ENCODE measurements at regions of chr19 and their contacts with region 1.

Region 1: DNA sequence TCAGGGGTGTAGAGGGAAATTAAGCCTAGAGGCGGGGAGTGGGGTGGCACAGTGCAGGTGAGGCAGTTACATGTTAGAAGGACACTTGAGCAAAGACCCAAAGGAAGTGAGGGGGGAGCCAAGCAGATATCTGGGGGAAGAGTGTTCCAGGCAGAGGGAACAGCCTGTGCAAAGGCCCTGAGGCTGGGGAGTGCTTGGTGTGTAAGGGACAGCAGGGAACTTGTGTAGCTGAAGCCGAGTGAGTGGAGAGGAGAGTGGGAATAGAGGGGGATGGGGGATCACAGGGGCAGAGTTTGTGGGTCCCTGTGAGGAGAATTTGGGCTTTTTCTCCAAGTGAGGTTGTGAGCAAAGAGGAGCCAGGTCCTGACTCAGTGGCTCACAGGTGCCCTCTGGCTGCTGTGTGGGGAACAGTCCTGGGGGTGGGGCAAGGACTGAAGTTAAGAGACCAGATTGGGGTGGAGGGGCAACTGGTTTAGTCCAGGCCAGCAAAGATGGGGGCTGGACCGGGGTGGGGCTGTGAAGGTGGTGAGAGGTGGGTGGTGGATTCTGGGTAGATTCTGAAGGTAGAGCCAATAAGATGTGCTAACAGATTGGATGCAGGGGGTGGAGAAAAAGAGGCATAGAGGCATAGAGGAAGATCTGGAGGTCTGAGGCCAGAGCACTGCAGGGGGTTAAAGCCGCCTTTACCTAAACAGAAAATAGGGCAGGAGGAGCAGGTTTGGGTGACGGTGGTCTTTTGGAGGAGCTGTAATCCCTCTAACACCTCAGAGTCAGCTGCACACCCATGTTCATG is 75.3 kb downstream of the CACNA1A start:
- DNase-seq: peak; percentile 25
- H3K4me3 ChIP-seq: no peak overlapping the region
- H3K27ac ChIP-seq: no peak overlapping the region
- H3K4me1 ChIP-seq: no peaks in the 10 kb centered on the region
- H3K27me3 ChIP-seq: no peaks in the 10 kb centered on the region
- CTCF ChIP-seq: peak; percentile 90 to 97

Region 2: DNA sequence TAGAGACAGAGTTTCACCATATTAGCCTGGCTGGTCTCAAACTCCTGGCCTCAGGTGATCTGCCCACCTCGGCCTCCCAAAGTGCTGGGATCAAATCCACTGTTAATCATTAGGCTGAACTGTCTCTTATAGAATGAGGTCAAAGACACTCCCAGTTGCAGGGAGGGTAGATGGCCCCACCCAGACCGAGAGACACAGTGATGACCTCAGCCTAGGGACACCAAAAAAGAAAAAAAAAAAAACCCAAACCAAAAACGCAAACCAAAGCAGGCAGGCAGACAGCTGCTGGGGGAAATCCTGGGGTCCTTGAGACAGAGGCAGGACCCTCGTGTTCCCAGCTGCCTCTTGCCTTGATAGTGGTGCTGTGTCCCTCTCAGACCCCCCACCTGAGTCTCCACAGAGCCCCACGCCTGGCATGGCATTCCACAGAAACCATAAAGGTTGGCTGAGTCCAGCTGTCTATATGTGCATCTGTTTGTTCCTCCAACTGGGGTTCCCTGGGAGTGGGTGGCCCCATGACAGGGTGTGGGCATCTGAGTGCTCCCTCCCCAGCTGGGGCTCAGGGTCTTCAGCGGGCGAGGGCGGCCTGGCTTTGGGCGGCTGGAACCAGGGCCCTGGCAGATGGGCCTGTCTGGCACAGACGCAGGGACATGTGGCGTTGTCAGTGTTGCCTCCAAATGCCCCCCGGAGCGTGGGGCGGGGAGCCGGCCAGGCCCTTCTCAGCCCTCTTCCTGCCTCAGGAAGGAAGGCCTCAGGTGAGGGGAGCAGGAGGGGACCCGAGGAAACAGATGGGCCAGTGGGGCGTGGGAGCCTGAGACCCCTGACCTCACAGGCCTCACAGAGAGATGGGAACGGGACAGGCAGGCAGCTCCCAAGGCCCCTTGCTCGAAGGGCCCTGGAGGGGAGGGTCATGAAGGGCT is 456.4 kb before region 1 on chr19:
- CTCF ChIA-PET with region 1: no interaction called
- dilution Hi-C with region 1: no loop called
- in situ Hi-C with region 1: no loop called
- intact Hi-C with region 1: loop called (anchors 5 kb)
- DNase-seq: no peak
- H3K4me3 ChIP-seq: no peak overlapping the region
- H3K27ac ChIP-seq: no peak overlapping the region
- H3K4me1 ChIP-seq: no peaks in the 10 kb centered on the region
- H3K27me3 ChIP-seq: peaks cover 3% of the 10 kb centered on the region
- CTCF ChIP-seq: no peak

Region 3: DNA sequence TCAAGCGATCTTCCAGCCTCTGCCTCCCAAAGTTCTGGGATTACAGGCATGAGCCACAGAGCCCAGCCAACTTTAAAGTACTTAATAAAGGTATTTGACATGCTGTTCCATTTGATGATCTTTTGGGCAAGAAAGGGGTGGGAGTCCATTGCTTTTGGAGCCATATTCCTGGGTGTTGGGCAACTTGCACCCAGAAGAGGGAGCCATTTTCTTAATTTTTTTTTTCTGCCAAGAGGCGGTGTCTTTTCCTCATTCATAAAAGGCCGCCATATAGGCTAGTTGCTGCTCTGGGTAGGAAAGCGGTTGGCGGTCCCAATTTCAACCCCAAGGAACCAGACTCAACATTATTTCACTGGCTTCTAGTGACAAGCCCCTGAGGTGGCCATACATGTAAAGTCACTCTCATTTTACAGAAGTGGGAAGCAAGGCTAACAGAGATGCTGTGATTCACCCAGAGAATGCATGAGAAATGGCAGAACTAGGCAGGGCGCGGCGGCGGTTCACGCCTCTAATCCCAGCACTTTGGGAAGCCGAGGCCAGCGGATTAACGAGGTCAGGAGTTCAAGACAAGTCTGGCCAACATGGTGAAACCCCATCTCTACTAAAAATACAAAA is 64.3 kb before region 1 on chr19:
- CTCF ChIA-PET with region 1: interaction called, 4 read pairs
- dilution Hi-C with region 1: no loop called
- in situ Hi-C with region 1: loop called (anchors 5 kb)
- intact Hi-C with region 1: loop called (anchors 1 kb)
- DNase-seq: peak; percentile 5
- H3K4me3 ChIP-seq: no peak overlapping the region
- H3K27ac ChIP-seq: no peak overlapping the region
- H3K4me1 ChIP-seq: no peaks in the 10 kb centered on the region
- H3K27me3 ChIP-seq: no peaks in the 10 kb centered on the region
- CTCF ChIP-seq: peak; percentile 65 to 67

Region 4: GRCh38 chr19:13583753-13584152 is 152.8 kb after region 1 on chr19:
- CTCF ChIA-PET with region 1: interaction called, 10 read pairs
- dilution Hi-C with region 1: no loop called
- in situ Hi-C with region 1: no loop called
- intact Hi-C with region 1: loop called (anchors 2 kb)
- DNase-seq: no peak
- H3K4me3 ChIP-seq: no peak overlapping the region
- H3K27ac ChIP-seq: no peak overlapping the region
- H3K4me1 ChIP-seq: no peaks in the 10 kb centered on the region
- H3K27me3 ChIP-seq: no peaks in the 10 kb centered on the region
- CTCF ChIP-seq: no peak

Region 5: GRCh38 chr19:13588957-13589833 is 158.2 kb after region 1 on chr19:
- CTCF ChIA-PET with region 1: interaction called, 10 read pairs
- dilution Hi-C with region 1: no loop called
- in situ Hi-C with region 1: no loop called
- intact Hi-C with region 1: loop called (anchors 2 kb)
- DNase-seq: peak; percentile 40
- H3K4me3 ChIP-seq: no peak overlapping the region
- H3K27ac ChIP-seq: no peak overlapping the region
- H3K4me1 ChIP-seq: no peaks in the 10 kb centered on the region
- H3K27me3 ChIP-seq: no peaks in the 10 kb centered on the region
- CTCF ChIP-seq: peak; percentile 74 to 97